ENCODE measurements at regions of chr5 and their contacts with region 1.

Region 1: GRCh38 chr5:93582677-93583438 is at the start of gene NR2F1:
- DNase-seq: peak; percentile 91
- H3K4me3 ChIP-seq: peak within 1 kb of the TSS; percentile 98
- H3K27ac ChIP-seq: peak within 1 kb of the TSS; percentile 59
- H3K4me1 ChIP-seq: peaks cover 19% of the 10 kb centered on the region; the same call in 1 of the 2 replicates
- H3K27me3 ChIP-seq: no peaks in the 10 kb centered on the region
- total RNA-seq, gene NR2F1: 14.3 and 17.1 TPM in 2 replicates

Region 2: DNA sequence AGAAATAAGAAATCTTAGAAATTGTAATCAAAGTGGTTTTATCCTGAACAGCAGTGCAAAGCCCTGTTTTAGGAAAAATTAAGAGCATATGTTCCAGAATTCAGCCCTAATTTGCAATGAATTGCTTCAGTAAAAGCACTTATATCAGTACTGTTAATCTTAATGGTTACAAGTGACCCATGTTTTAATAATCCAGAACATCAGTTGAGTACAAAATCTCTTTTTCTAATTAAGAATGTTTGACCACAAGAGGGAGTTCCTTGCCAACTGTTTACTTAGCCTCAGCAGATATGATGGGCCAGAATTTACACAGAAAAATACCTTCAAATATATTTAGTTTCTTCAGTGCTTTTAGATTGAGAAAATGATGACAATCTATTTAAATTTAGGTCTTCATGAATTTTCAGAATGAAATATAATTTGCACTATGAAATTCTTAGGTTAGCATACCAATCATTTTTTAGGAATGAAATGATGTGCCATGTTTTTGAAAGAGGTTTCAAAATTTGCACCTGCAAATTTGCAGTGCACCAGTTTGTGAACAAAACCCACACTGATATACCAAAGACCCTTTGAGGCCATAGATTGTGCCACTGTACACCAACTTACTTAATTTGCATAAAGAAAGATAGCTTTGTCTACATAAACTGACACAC is 1273.4 kb before region 1 on chr5:
- in situ Hi-C with region 1: loop called (anchors 25 kb)
- DNase-seq: peak; percentile 70
- H3K4me3 ChIP-seq: no peak overlapping the region
- H3K27ac ChIP-seq: no peak overlapping the region
- H3K4me1 ChIP-seq: peaks cover 18% of the 10 kb centered on the region
- H3K27me3 ChIP-seq: no peaks in the 10 kb centered on the region

Region 3: GRCh38 chr5:93915142-93915553 is 332.3 kb after region 1 on chr5:
- in situ Hi-C with region 1: loop called (anchors 10 kb)
- DNase-seq: peak; percentile 68
- H3K4me3 ChIP-seq: no peak overlapping the region
- H3K27ac ChIP-seq: no peak overlapping the region
- H3K4me1 ChIP-seq: no peaks in the 10 kb centered on the region
- H3K27me3 ChIP-seq: no peaks in the 10 kb centered on the region